Activated naive CD4-positive, alpha-beta T cell treated with anti-CD3 and anti-CD28 coated beads for 36 hours (primary cell): ENCODE measurements at regions of chr7 and their contacts with region 1.

Region 1: GRCh38 chr7:151315038-151315655 is 26.5 kb upstream of the NUB1 start:
- DNase-seq: peak; percentile 87
- H3K4me3 Mint-ChIP-seq: peak overlapping the region; percentile 44
- H3K27ac Mint-ChIP-seq: no peak overlapping the region
- H3K4me1 Mint-ChIP-seq: peaks cover 9% of the 10 kb centered on the region
- H3K27me3 Mint-ChIP-seq: no peaks in the 10 kb centered on the region

Region 2: GRCh38 chr7:151327659-151328058 is 12.5 kb after region 1 on chr7:
- CTCF ChIA-PET with region 1: interaction called, 54 read pairs
- intact Hi-C with region 1: no loop called
- DNase-seq: no peak
- H3K4me3 Mint-ChIP-seq: no peak overlapping the region
- H3K27ac Mint-ChIP-seq: no peak overlapping the region
- H3K4me1 Mint-ChIP-seq: no peaks in the 10 kb centered on the region
- H3K27me3 Mint-ChIP-seq: no peaks in the 10 kb centered on the region

Region 3: DNA sequence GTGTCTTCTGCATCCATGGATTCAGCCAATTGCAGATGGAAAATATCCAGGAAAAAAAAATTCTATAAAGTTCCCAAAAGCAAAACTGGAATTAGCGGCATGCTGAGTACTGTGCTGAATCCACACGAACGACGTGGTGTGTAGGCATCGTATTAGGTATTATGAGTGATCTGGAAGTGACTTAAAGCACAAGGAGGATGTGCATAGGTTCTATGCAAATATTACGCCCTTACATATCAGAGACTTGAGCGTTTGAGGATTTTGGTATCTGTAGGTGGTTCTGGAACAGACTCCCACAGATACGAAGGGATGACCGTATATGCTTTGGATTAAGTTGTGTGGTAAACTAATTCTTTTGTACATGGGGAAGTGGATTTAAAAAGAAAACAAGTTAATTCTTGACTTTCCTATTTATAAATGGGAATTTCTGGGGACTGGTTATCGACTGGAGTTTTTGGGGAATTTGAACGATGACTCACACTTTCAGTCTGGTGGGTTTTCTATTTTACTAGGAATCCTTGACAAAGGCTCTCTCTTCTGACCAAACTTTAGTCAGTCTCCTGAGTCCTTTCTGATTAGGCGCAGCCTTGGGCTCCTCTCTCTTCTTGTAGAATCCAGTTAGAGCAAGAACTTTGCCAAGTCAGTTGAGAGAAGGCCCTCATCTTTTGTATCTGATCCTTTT is 21.0 kb after region 1 on chr7:
- CTCF ChIA-PET with region 1: interaction called, 21 read pairs
- intact Hi-C with region 1: loop called (anchors 1 kb)
- DNase-seq: no peak
- H3K4me3 Mint-ChIP-seq: no peak overlapping the region
- H3K27ac Mint-ChIP-seq: no peak overlapping the region
- H3K4me1 Mint-ChIP-seq: peaks cover 29% of the 10 kb centered on the region
- H3K27me3 Mint-ChIP-seq: no peaks in the 10 kb centered on the region

Region 4: GRCh38 chr7:151341357-151342101 is 26.4 kb after region 1 on chr7 and contains the start of gene NUB1:
- CTCF ChIA-PET with region 1: interaction called, 18 read pairs
- intact Hi-C with region 1: loop called (anchors 1 kb)
- DNase-seq: peak; percentile 92
- H3K4me3 Mint-ChIP-seq: peak within 1 kb of the TSS; percentile 75
- H3K27ac Mint-ChIP-seq: peak within 1 kb of the TSS; percentile 82
- H3K4me1 Mint-ChIP-seq: peaks cover 46% of the 10 kb centered on the region
- H3K27me3 Mint-ChIP-seq: no peaks in the 10 kb centered on the region
- total RNA-seq, gene NUB1: 46.6 to 50.3 TPM

Region 5: GRCh38 chr7:151368136-151368571 is 53.0 kb after region 1 on chr7:
- CTCF ChIA-PET with region 1: interaction called, 12 read pairs
- intact Hi-C with region 1: loop called (anchors 1 kb)
- DNase-seq: peak; percentile 86
- H3K4me3 Mint-ChIP-seq: no peak overlapping the region
- H3K27ac Mint-ChIP-seq: no peak overlapping the region
- H3K4me1 Mint-ChIP-seq: peaks cover 7% of the 10 kb centered on the region
- H3K27me3 Mint-ChIP-seq: no peaks in the 10 kb centered on the region